AG04450 (cell line): ENCODE measurements at regions of chr10 and their contacts with region 1.

Region 1: GRCh38 chr10:32958085-32959005 is at the start of gene ITGB1:
- DNase-seq: peak; percentile 92
- H3K4me3 ChIP-seq: peak within 1 kb of the TSS; percentile 80
- H3K27ac ChIP-seq: peak within 1 kb of the TSS; percentile 99
- H3K27me3 ChIP-seq: no peaks in the 10 kb centered on the region
- CTCF ChIP-seq: no peak
- polyA plus RNA-seq, gene ITGB1: 1,870 and 2,796 TPM in 2 replicates

Region 2: DNA sequence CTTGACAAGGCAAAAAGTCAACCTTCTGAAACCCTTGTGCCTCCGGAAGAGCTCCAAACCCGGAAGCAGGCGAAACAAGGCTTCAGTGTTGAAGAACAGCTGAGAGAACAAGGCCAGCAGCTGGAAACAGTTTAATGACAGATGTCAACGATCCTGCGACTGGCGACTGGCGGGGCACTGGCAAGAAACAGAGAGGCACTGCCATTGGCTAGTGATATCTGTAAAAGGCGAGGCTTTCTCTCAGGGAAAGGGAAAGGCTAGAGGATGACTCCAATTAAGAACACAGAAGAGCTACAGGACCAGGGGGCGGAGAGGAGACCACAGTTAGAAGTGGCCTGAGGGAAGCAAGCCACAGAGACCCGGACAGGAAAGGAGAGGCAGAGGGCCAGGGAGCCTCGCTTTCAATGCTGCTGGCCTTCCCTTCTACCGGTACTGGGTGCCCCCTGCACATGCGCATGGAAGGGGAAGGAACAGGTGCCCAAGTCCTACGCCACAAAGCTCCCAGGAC is 19.7 kb before region 1 on chr10:
- CTCF ChIA-PET with region 1: no interaction called
- POLR2A ChIA-PET with region 1: no interaction called
- DNase-seq: no peak
- H3K4me3 ChIP-seq: peak overlapping the region; percentile 34
- H3K27ac ChIP-seq: peak overlapping the region; percentile 88
- H3K27me3 ChIP-seq: no peaks in the 10 kb centered on the region
- CTCF ChIP-seq: no peak

Region 3: DNA sequence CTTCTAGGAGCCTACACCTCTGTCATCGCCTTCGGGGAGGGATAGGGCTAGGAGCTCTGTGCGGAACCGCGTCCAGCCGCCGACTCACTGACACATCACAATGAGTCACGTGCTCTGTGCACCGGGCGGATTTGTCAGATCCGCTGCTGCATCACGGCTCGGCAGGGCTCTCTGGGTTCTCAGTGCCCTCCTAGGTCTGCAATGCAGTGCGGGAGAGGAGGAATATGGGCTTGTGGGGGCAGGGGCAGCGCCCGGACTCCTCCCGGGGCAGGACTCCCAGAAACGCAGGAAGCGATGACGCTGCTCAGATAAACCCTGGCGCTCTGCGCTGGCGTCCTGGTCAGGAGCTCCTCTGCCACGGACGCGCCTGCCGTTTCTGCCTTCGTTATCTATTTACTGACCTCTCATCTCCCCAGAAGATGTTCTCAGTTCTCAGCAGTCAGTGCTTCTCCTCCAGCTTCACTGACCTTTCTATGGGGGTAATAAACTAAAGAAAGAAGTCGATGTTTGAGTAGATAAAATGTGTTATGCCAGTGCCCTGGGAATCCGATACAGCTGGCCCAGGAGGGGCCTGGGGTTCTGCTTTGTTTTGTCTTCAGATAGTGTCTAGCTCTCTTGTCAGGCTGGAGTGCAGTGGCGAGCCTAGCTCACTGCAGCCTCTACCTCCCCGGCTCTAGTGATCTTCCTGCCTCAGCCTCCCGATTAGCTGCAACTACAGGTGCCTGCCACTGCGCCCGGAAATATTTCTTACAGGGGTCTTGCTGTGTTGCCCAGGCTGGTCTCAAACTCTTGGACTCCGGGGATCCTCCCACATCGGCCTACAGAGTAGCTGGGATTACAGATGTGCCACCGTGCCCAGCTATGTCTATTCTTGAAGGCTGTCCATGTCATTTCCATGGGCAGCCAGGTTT is 22.5 kb after region 1 on chr10:
- CTCF ChIA-PET with region 1: interaction called, 4 read pairs
- POLR2A ChIA-PET with region 1: interaction called, 28 read pairs
- DNase-seq: peak; percentile 97
- H3K4me3 ChIP-seq: peak overlapping the region; percentile 51
- H3K27ac ChIP-seq: peak overlapping the region; percentile 99
- H3K27me3 ChIP-seq: no peaks in the 10 kb centered on the region
- CTCF ChIP-seq: 0 out of 2 replicates have a peak, but pooled peaks have one; percentile 8

Region 4: GRCh38 chr10:33248638-33249037 is 290.3 kb after region 1 on chr10:
- CTCF ChIA-PET with region 1: no interaction called
- POLR2A ChIA-PET with region 1: no interaction called
- DNase-seq: peak; percentile 74
- H3K4me3 ChIP-seq: no peak overlapping the region
- H3K27ac ChIP-seq: no peak overlapping the region
- H3K27me3 ChIP-seq: no peaks in the 10 kb centered on the region
- CTCF ChIP-seq: no peak